ENCODE measurements at regions of chr19 and their contacts with region 1.

Region 1: DNA sequence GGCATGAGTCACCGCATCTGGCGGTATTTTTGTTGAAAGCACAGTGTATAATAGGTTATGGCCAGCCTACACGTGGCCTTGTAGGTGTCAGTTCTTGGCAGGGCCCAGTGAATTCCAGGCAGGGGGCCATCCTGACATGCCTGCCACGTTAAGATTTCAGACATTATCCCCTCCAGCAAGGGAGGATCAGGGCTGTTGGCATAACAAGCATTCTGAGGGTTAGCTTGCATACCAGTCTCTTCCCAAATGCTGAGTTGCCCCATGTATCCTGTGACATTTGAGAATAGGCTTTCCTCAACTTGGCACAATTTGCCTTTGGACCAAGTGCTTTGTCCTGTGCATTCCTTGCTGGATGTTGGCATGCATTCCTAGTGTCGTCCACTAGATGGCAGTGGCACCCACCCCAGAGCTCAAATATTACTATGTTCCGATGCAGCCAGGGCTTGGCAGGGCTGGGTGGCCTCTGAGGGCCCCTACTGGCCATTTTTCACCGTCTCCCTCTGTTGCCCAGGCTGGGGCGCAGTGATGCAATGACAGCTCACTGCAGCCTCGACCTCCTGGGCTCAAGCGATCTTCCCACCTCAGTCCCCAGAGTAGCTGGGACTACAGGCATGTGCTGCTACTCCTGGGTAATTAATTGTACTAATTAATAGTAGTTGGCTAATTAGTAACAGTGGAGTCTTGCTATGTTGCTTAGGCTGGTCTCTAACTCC is 31.2 kb downstream of the NLRP12 start:
- DNase-seq: peak; percentile 88
- ATAC-seq: peak; percentile 97
- H3K4me3 ChIP-seq: no peak overlapping the region
- H3K27ac ChIP-seq: no peak overlapping the region
- H3K4me1 ChIP-seq: peaks cover 41% of the 10 kb centered on the region
- H3K27me3 ChIP-seq: no peaks in the 10 kb centered on the region
- CTCF ChIP-seq: peak; percentile 98
- EP300 ChIP-seq: no peak
- POLR2A ChIP-seq: no peak
- RAD21 ChIP-seq: peak; percentile 97

Region 2: DNA sequence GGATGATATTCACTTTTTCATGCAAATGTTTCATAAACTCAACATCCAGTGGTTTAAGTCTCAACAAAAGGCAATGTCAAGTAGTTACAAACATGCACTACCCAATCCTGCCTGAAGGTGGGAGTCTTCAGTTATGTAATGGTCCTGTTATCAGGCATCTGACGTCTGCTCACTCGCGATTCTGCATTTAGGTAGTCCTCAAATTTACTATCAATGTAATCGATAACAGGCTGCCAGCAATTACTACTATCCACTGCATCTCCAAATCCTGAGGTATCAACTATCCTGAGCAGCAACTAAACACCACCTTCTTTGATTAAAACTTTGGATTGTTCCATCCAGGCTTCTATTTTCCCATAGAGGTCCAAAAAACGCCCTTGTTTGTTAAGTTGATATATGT is 19.9 kb before region 1 on chr19:
- CTCF ChIA-PET with region 1: interaction called, 18 read pairs
- POLR2A ChIA-PET with region 1: no interaction called
- in situ Hi-C with region 1: no loop called
- intact Hi-C with region 1: no loop called
- DNase-seq: peak; percentile 67
- ATAC-seq: no peak
- H3K4me3 ChIP-seq: no peak overlapping the region
- H3K27ac ChIP-seq: no peak overlapping the region
- H3K4me1 ChIP-seq: peaks cover 13% of the 10 kb centered on the region
- H3K27me3 ChIP-seq: no peaks in the 10 kb centered on the region
- CTCF ChIP-seq: peak; percentile 84
- EP300 ChIP-seq: no peak
- POLR2A ChIP-seq: no peak
- RAD21 ChIP-seq: no peak

Region 3: GRCh38 chr19:53826876-53827275 is 34.0 kb after region 1 on chr19:
- CTCF ChIA-PET with region 1: no interaction called
- POLR2A ChIA-PET with region 1: no interaction called
- in situ Hi-C with region 1: no loop called
- intact Hi-C with region 1: no loop called
- DNase-seq: no peak
- ATAC-seq: no peak
- H3K4me3 ChIP-seq: no peak overlapping the region
- H3K27ac ChIP-seq: no peak overlapping the region
- H3K4me1 ChIP-seq: peaks cover 18% of the 10 kb centered on the region
- H3K27me3 ChIP-seq: peaks cover 0 to 12% of the 10 kb centered on the region in 2 experiments; a peak in 1 of 5 replicates
- CTCF ChIP-seq: no peak
- EP300 ChIP-seq: no peak
- POLR2A ChIP-seq: no peak
- RAD21 ChIP-seq: no peak

Region 4: GRCh38 chr19:53853707-53854106 is 60.8 kb after region 1 on chr19:
- CTCF ChIA-PET with region 1: no interaction called
- POLR2A ChIA-PET with region 1: no interaction called
- in situ Hi-C with region 1: no loop called
- intact Hi-C with region 1: no loop called
- DNase-seq: no peak
- ATAC-seq: no peak
- H3K4me3 ChIP-seq: no peak overlapping the region
- H3K27ac ChIP-seq: no peak overlapping the region
- H3K4me1 ChIP-seq: peaks cover 22% of the 10 kb centered on the region
- H3K27me3 ChIP-seq: peaks cover 0 to 3% of the 10 kb centered on the region in 2 experiments; a peak in 2 of 5 replicates
- CTCF ChIP-seq: no peak
- EP300 ChIP-seq: no peak
- POLR2A ChIP-seq: no peak
- RAD21 ChIP-seq: no peak

Region 5: DNA sequence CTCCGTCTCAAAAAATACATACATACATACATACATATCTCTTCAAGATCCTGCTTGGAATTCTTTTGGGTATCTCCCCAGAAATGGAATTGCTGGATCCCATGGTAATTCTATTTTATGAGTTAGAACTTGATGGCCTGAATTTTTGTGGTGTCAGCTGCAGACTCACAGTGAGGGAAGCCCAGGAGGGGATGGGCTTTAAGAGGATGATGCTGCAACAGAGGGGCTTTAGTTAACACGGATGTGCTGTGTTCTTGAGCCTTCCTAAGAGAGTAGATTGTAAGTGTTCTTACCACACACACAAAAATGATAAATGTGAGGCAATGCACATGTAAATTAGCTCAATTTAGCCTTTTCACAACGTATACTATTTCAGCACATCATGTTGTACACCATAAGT is 230.3 kb after region 1 on chr19:
- CTCF ChIA-PET with region 1: interaction called, 10 read pairs
- POLR2A ChIA-PET with region 1: no interaction called
- in situ Hi-C with region 1: no loop called
- intact Hi-C with region 1: loop called (anchors 5 kb)
- DNase-seq: no peak
- ATAC-seq: no peak
- H3K4me3 ChIP-seq: no peak overlapping the region
- H3K27ac ChIP-seq: no peak overlapping the region
- H3K4me1 ChIP-seq: peaks cover 43% of the 10 kb centered on the region
- H3K27me3 ChIP-seq: no peaks in the 10 kb centered on the region
- CTCF ChIP-seq: no peak
- EP300 ChIP-seq: no peak
- POLR2A ChIP-seq: no peak
- RAD21 ChIP-seq: no peak

Region 6: DNA sequence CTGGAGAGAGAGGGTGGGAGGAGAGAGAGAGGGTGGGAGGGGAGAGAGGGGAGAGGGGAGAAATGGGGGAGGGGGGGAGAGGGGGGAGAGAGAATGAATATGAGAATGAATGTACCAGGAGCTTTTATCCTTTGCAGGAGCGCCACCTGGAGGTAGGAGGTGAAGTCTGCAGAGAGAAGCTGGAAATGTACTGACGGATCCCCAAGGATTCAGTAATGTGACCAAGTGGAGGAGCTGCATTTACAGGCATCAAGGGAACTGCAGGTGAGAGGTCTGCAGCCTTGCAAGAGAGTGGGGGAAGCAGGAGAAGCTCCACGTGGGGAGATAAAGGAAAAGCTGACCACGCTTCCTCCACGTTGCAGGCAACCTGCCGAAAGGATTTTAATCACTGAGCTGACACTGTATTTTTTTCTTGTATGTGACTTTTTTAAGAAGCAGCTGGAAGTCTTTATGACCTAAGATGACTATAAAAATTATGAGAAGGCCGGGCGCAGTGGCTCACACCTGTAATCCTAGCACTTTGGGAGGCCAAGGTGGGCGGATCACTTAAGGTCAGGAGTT is 237.1 kb after region 1 on chr19:
- CTCF ChIA-PET with region 1: interaction called, 11 read pairs
- POLR2A ChIA-PET with region 1: no interaction called
- in situ Hi-C with region 1: no loop called
- intact Hi-C with region 1: no loop called
- DNase-seq: peak; percentile 72
- ATAC-seq: peak; percentile 77
- H3K4me3 ChIP-seq: no peak overlapping the region
- H3K27ac ChIP-seq: no peak overlapping the region
- H3K4me1 ChIP-seq: peaks cover 17% of the 10 kb centered on the region
- H3K27me3 ChIP-seq: no peaks in the 10 kb centered on the region; a peak in 2 of 5 replicates
- CTCF ChIP-seq: peak; percentile 79
- EP300 ChIP-seq: no peak
- POLR2A ChIP-seq: no peak
- RAD21 ChIP-seq: no peak